Activated CD4-positive, alpha-beta memory T cell treated with anti-CD3 and anti-CD28 coated beads, Interleukin-2, amount 10 ng/mL, durations not matched to agents 7 days and 5 days (primary cell): ENCODE measurements at regions of chr3 and their contacts with region 1.

Region 1: DNA sequence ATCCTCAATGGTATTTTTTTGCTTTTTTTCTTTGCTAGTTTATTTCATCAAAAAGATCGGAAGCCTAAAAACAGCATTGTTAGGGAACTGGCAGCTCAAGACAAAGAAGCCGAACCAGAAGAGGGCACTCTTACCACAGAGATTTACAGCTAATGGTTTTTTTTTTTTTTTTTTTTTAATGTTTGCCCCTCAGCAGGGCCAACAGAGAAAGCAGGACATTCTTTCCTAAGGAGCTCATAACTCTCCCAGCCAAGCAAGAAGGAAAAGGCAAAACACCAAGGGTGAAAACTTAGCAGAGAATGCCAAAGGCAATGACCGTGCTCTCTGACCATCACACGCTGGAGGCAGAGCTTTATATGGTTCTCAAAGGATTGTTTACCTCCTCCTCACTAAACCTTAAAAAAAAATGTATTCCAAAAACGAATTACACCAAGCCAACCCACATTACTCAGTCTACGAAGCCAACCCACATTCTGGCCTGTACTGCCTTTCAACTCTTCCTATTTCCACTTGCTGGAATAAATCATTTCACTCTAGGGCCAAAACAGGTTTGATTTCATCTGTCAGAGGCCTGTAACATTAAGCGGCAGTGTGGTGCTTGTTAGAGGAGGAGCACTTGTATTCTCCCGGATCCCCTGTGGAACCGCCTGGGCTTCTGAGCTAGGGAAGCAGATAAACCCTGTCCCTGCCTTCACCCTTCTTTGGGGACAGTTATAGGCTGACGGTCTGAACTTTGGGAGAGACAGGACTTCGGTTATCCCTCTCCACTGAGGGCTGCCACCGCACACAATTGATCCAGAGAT is 35.6 kb upstream of the GYG1 start:
- DNase-seq: no peak
- H3K4me3 Mint-ChIP-seq: no peak overlapping the region
- H3K27ac Mint-ChIP-seq: no peak overlapping the region
- H3K4me1 Mint-ChIP-seq: peaks cover 17% of the 10 kb centered on the region
- H3K27me3 Mint-ChIP-seq: peaks cover 8% of the 10 kb centered on the region

Region 2: GRCh38 chr3:148943506-148944205 is 12.1 kb before region 1 on chr3:
- CTCF ChIA-PET with region 1: interaction called, 10 read pairs
- POLR2A ChIA-PET with region 1: no interaction called
- DNase-seq: no peak
- H3K4me3 Mint-ChIP-seq: no peak overlapping the region
- H3K27ac Mint-ChIP-seq: no peak overlapping the region
- H3K4me1 Mint-ChIP-seq: no peaks in the 10 kb centered on the region
- H3K27me3 Mint-ChIP-seq: peaks cover 5% of the 10 kb centered on the region

Region 3: DNA sequence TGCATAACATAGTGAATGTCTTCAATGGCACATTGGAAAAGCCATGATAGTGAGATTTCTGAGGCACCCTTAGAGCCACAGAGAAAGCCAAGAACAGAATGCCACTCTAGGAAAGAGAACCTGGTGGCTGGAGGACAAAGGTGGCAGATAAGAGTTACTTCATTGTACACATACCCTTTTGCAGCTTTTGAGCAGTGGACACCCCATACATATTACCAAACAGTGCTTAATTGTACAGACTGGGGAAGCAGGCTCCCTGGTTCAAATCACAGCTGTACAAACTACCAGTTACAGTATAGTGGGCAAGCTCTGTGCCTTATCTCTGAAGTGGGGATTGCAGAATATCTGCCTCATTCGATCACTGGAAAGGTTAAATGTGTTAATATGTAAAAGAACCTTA is 25.5 kb after region 1 on chr3:
- CTCF ChIA-PET with region 1: no interaction called
- POLR2A ChIA-PET with region 1: no interaction called
- DNase-seq: no peak
- H3K4me3 Mint-ChIP-seq: no peak overlapping the region
- H3K27ac Mint-ChIP-seq: no peak overlapping the region
- H3K4me1 Mint-ChIP-seq: no peaks in the 10 kb centered on the region
- H3K27me3 Mint-ChIP-seq: peaks cover 9% of the 10 kb centered on the region

Region 4: GRCh38 chr3:149120051-149120972 is 164.6 kb after region 1 on chr3:
- CTCF ChIA-PET with region 1: interaction called, 29 read pairs
- POLR2A ChIA-PET with region 1: no interaction called
- DNase-seq: no peak
- H3K4me3 Mint-ChIP-seq: no peak overlapping the region
- H3K27ac Mint-ChIP-seq: no peak overlapping the region
- H3K4me1 Mint-ChIP-seq: no peaks in the 10 kb centered on the region
- H3K27me3 Mint-ChIP-seq: peaks cover 7% of the 10 kb centered on the region

Region 5: GRCh38 chr3:149273096-149273751 is 317.5 kb after region 1 on chr3:
- CTCF ChIA-PET with region 1: interaction called, 55 read pairs
- POLR2A ChIA-PET with region 1: no interaction called
- DNase-seq: no peak
- H3K4me3 Mint-ChIP-seq: no peak overlapping the region
- H3K27ac Mint-ChIP-seq: no peak overlapping the region
- H3K4me1 Mint-ChIP-seq: peaks cover 11% of the 10 kb centered on the region
- H3K27me3 Mint-ChIP-seq: peaks cover 8% of the 10 kb centered on the region